ENCODE measurements at regions of chr9 and their contacts with region 1.

Region 1: GRCh38 chr9:128081056-128081455 is 13.0 kb downstream of the SLC25A25 start:
- DNase-seq: no peak
- ATAC-seq: peak; percentile 78 to 87

Region 2: GRCh38 chr9:128117613-128118471 is 36.8 kb after region 1 on chr9:
- intact Hi-C with region 1: loop called in 1 of 2 experiments (anchors 5 kb)
- DNase-seq: peak; percentile 94
- ATAC-seq: peak; percentile 61 to 72

Region 3: GRCh38 chr9:128162215-128163026 is 81.4 kb after region 1 on chr9:
- intact Hi-C with region 1: no loop called
- DNase-seq: peak; percentile 63
- ATAC-seq: peak in 1 of 2 donors; percentile 44